T-cell (primary cell): ENCODE measurements at regions of chr9 and their contacts with region 1.

Region 1: GRCh38 chr9:96327694-96328352 is 25.8 kb upstream of the HSD17B3 start:
- DNase-seq: peak in 21 of 35 experiments; percentile 3 to 75 (median 21)
- ATAC-seq: peak; percentile 46 to 68 (median 60)
- H3K4me3 ChIP-seq: no peak overlapping the region
- H3K4me3 Mint-ChIP-seq: no peak overlapping the region
- H3K27ac ChIP-seq: no peak overlapping the region
- H3K27ac Mint-ChIP-seq: no peak overlapping the region
- H3K4me1 ChIP-seq: no peaks in the 10 kb centered on the region
- H3K4me1 Mint-ChIP-seq: no peaks in the 10 kb centered on the region
- H3K27me3 ChIP-seq: no peaks in the 10 kb centered on the region
- H3K27me3 Mint-ChIP-seq: no peaks in the 10 kb centered on the region

Region 2: GRCh38 chr9:95360866-95361265 is 967.0 kb before region 1 on chr9:
- CTCF ChIA-PET with region 1: no interaction called
- POLR2A ChIA-PET with region 1: no interaction called
- DNase-seq: no peak
- ATAC-seq: no peak
- H3K4me3 ChIP-seq: no peak overlapping the region
- H3K4me3 Mint-ChIP-seq: no peak overlapping the region
- H3K27ac ChIP-seq: no peak overlapping the region
- H3K27ac Mint-ChIP-seq: no peak overlapping the region
- H3K4me1 ChIP-seq: no peaks in the 10 kb centered on the region
- H3K4me1 Mint-ChIP-seq: no peaks in the 10 kb centered on the region
- H3K27me3 ChIP-seq: peaks cover 2 to 22% of the 10 kb centered on the region in 2 experiments
- H3K27me3 Mint-ChIP-seq: peaks cover 32 to 40% of the 10 kb centered on the region in 2 donors

Region 3: GRCh38 chr9:96302021-96302420 is 25.8 kb before region 1 on chr9 and contains the start of gene HSD17B3:
- CTCF ChIA-PET with region 1: no interaction called
- POLR2A ChIA-PET with region 1: no interaction called
- DNase-seq: no peak
- ATAC-seq: no peak
- H3K4me3 ChIP-seq: no peak within 1 kb of the TSS
- H3K4me3 Mint-ChIP-seq: no peak within 1 kb of the TSS
- H3K27ac ChIP-seq: no peak within 1 kb of the TSS
- H3K27ac Mint-ChIP-seq: no peak within 1 kb of the TSS
- H3K4me1 ChIP-seq: no peaks in the 10 kb centered on the region
- H3K4me1 Mint-ChIP-seq: no peaks in the 10 kb centered on the region
- H3K27me3 ChIP-seq: peaks cover 3 to 5% of the 10 kb centered on the region in 2 experiments
- H3K27me3 Mint-ChIP-seq: peaks cover 0 to 10% of the 10 kb centered on the region in 2 donors
- total RNA-seq, gene HSD17B3: 0.58 to 2.5 (median 1.2) TPM

Region 4: DNA sequence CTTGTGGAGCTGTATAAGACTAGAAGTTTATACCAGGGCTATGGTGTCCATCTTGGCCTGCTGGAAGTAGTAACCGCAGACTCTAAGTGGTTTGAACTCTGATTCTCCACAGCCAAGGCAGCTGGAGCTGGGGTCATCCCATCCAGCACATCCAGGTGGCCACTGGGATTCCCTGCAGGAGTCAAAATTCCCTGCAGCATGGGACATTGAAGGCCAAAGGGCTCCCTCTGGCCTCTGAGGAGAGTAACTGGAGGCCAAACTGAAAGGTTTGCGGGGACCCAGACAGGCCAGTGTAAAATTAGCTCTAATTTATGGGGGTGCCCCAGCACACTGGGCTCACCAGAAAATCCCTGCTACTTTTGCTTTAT is 339.5 kb after region 1 on chr9:
- CTCF ChIA-PET with region 1: interaction called, 5 to 16 read pairs
- POLR2A ChIA-PET with region 1: no interaction called
- DNase-seq: no peak
- ATAC-seq: no peak
- H3K4me3 ChIP-seq: no peak overlapping the region
- H3K4me3 Mint-ChIP-seq: no peak overlapping the region
- H3K27ac ChIP-seq: no peak overlapping the region
- H3K27ac Mint-ChIP-seq: no peak overlapping the region
- H3K4me1 ChIP-seq: no peaks in the 10 kb centered on the region
- H3K4me1 Mint-ChIP-seq: no peaks in the 10 kb centered on the region
- H3K27me3 ChIP-seq: peaks cover 0 to 14% of the 10 kb centered on the region in 2 experiments
- H3K27me3 Mint-ChIP-seq: peaks cover 6 to 19% of the 10 kb centered on the region in 2 donors